H1 (cell line): ENCODE measurements at regions of chr4 and their contacts with region 1.

Region 1: DNA sequence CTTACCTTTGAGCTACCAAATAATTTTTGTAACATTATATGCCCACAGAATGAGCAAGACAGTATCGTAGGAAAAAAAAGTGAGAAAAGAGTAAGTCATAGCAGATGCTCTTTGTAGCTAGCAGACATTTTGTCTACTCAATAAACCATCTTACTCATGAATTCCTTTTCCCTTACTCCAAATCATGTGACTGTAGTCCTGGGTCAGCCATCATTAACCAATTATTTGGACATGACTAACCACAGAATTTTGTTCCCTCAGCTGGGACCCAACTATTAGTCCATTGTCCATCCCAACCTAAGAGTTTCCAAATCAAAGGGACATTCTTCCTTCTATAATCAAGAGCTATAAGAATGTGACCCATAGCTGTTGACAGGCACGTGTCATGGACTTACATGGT is 11.4 kb downstream of the UBE2D3 start:
- DNase-seq: no peak
- H3K4me3 ChIP-seq: no peak overlapping the region
- H3K27ac ChIP-seq: no peak overlapping the region
- H3K4me1 ChIP-seq: peaks cover 0 to 16% (median 5%) of the 10 kb centered on the region in 4 experiments; a peak in 4 of 7 replicates
- H3K27me3 ChIP-seq: no peaks in the 10 kb centered on the region
- CTCF ChIP-seq: no peak
- EP300 ChIP-seq: no peak
- POLR2A ChIP-seq: no peak
- RAD21 ChIP-seq: no peak

Region 2: DNA sequence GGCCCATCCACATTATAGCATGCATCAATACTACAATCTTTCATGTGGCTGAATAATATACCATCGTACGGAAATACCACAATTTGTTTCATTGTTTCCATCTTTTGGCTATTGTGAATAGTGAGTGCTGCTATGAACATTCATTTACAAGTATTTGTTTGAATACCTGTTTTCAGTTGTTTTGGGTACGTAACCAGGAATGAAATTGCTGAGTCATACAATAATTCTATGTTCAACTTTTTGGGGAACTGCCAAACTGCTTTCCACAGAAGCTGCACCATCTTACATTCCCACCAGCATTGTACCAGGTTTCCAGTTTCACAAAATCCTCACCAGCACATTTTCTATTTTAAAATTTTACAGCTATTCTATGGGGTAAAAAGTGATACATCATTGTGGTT is 26.7 kb before region 1 on chr4:
- CTCF ChIA-PET with region 1: no interaction called
- POLR2A ChIA-PET with region 1: interaction called, 12 read pairs
- DNase-seq: no peak
- H3K4me3 ChIP-seq: no peak overlapping the region
- H3K27ac ChIP-seq: no peak overlapping the region
- H3K4me1 ChIP-seq: no peaks in the 10 kb centered on the region
- H3K27me3 ChIP-seq: no peaks in the 10 kb centered on the region
- CTCF ChIP-seq: no peak
- EP300 ChIP-seq: no peak
- POLR2A ChIP-seq: no peak
- RAD21 ChIP-seq: no peak

Region 3: DNA sequence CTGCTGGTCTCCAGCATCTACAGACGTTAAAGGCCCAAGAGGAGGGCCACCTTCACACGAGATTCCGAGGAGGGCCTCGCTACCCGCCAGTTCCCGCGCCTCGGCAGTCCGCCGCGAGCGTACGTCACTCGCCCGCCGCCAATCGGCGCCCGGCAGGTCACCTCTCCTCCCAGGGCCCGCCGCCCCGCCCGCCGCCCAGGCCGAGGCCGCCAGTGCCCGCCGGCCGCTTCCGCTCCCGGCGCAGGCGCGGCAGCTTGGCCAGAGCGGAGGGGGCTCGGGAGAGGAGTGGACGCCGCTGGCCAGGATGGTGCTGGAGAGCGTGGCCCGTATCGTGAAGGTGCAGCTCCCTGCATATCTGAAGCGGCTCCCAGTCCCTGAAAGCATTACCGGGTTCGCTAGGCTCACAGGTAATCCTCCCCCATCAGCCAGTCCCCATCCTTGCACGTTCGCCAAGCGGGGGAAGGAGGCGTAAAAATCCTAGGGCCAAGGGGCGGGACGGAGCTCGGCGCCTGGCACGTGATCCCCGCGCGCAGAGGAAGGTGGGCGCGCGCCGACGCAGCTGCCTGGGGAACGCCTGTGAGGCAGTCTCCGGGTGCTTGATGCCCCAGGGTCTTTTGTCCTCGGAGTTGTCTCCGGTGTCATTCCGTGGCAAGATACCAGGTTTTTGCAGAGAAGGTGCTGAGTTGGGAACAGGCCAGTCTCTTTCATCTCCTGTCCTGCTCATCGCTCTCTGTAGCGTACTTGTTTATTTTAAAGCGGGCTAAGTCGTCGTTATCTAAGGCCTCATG is 53.0 kb after region 1 on chr4 and contains the start of gene CISD2:
- CTCF ChIA-PET with region 1: no interaction called
- POLR2A ChIA-PET with region 1: interaction called, 11 read pairs
- DNase-seq: peak; percentile 66 to 92
- H3K4me3 ChIP-seq: peak within 1 kb of the TSS; percentile 73 to 86 (median 78)
- H3K27ac ChIP-seq: peak within 1 kb of the TSS; percentile 98
- H3K4me1 ChIP-seq: 0 out of 7 replicates have a peak, but pooled peaks cover 0 to 2% (median 0%) of the 10 kb centered on the region in 4 experiments
- H3K27me3 ChIP-seq: no peaks in the 10 kb centered on the region
- CTCF ChIP-seq: no peak
- EP300 ChIP-seq: no peak
- POLR2A ChIP-seq: peak; percentile 97 to 99
- RAD21 ChIP-seq: no peak; a peak in 1 of 4 replicates
- total RNA-seq, gene CISD2: 47.5 and 48.3 TPM in 2 replicates